Activated CD8-positive, alpha-beta T cell treated with anti-CD3 and anti-CD28 coated beads for 36 hours (primary cell): ENCODE measurements at regions of chr14 and their contacts with region 1.

Region 1: GRCh38 chr14:86050072-86050683 is 520.2 kb downstream of the FLRT2 start:
- DNase-seq: no peak
- ATAC-seq: no peak
- H3K4me3 Mint-ChIP-seq: no peak overlapping the region
- H3K27ac Mint-ChIP-seq: no peak overlapping the region
- H3K4me1 Mint-ChIP-seq: peaks cover 3% of the 10 kb centered on the region
- H3K27me3 Mint-ChIP-seq: no peaks in the 10 kb centered on the region
- CTCF ChIP-seq: no peak

Region 2: DNA sequence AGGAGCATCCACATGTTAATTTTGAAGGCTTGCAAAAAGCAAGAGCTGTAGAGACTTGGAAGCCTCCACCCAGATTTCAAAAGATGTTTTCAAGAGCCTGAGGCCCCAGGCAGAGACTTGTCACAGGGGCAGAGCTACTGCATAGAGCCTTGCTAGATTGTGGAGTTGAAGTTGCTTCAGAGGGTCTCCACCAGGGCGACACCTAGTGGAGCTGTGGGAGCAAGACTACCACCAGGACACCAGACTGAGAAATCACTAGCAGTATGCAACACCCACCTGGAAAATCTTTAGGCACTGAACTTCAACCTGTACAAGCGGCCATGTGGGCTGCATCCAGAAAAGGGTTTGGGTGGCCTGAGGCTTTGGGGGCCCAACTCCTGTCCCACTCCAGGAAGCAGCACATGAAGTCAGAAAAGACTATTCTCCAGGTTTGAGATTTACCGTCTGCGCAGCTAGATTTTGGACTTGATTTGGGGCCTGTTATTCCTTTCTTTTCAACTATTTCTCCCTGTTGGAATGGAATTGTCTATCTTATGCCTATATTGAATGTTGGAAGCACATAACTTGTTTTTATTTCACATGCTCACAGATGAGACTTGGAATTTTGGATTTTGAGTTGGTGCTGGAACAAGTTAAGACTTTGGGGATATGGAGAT is 11.7 kb before region 1 on chr14:
- CTCF ChIA-PET with region 1: interaction called, 13 read pairs
- POLR2A ChIA-PET with region 1: no interaction called
- intact Hi-C with region 1: no loop called
- DNase-seq: peak; percentile 62
- ATAC-seq: peak; percentile 78
- H3K4me3 Mint-ChIP-seq: no peak overlapping the region
- H3K27ac Mint-ChIP-seq: no peak overlapping the region
- H3K4me1 Mint-ChIP-seq: no peaks in the 10 kb centered on the region
- H3K27me3 Mint-ChIP-seq: no peaks in the 10 kb centered on the region
- CTCF ChIP-seq: peak; percentile 65